ENCODE measurements at regions of chr4 and their contacts with region 1.

Region 1: DNA sequence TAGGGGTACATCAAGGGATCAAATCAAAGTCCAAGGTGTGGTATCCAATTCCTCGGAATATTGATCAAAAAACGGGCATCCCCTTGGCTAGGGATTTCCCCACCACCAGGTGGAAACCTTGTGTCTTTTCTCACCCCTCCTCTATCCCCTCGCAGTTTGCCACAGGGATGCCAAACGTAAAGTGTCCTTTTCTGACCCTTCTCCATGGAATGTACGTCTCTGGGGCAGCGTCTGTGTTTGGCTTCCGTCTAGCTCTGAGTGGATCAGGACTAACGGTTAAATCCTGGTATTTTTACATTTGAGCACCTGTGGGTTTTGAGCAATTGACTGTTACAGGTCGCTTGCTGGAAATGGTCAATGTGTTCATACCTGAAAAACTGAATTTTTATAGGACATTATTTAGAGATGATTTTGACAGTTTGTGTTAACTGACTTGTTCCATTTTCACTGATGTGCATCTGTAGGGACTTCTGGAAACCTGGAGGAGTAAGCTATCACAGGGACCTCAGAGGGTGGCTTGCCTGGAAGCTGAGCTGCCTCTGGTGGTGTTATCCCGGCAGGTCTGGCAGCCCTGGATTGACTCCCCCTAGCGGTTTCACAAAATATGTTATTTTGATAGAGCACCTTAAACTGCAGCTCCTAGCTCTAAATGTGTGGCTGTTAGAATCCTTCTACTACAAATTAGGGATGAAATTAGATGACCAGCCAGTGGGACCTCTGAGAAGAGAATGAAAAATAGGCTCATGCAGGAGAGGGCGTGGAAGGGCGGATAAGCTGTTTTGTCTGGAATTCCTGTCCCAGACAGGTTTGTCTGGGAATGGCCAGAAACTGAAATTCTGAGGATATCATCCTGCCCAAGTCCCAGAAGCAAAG is 8.8 kb upstream of the MGST2 start:
- DNase-seq: peak; percentile 63
- H3K4me3 Mint-ChIP-seq: peak overlapping the region; percentile 61
- H3K27ac Mint-ChIP-seq: peak overlapping the region; percentile 93
- H3K4me1 Mint-ChIP-seq: peaks cover 28% of the 10 kb centered on the region
- H3K27me3 Mint-ChIP-seq: peaks cover 7% of the 10 kb centered on the region

Region 2: GRCh38 chr4:139266583-139267257 is 390.1 kb before region 1 on chr4:
- CTCF ChIA-PET with region 1: no interaction called
- POLR2A ChIA-PET with region 1: no interaction called
- intact Hi-C with region 1: loop called (anchors 2 kb)
- DNase-seq: peak; percentile 94
- H3K4me3 Mint-ChIP-seq: peak overlapping the region; percentile 28
- H3K27ac Mint-ChIP-seq: peak overlapping the region; percentile 84
- H3K4me1 Mint-ChIP-seq: peaks cover 19% of the 10 kb centered on the region
- H3K27me3 Mint-ChIP-seq: peaks cover 1% of the 10 kb centered on the region

Region 3: DNA sequence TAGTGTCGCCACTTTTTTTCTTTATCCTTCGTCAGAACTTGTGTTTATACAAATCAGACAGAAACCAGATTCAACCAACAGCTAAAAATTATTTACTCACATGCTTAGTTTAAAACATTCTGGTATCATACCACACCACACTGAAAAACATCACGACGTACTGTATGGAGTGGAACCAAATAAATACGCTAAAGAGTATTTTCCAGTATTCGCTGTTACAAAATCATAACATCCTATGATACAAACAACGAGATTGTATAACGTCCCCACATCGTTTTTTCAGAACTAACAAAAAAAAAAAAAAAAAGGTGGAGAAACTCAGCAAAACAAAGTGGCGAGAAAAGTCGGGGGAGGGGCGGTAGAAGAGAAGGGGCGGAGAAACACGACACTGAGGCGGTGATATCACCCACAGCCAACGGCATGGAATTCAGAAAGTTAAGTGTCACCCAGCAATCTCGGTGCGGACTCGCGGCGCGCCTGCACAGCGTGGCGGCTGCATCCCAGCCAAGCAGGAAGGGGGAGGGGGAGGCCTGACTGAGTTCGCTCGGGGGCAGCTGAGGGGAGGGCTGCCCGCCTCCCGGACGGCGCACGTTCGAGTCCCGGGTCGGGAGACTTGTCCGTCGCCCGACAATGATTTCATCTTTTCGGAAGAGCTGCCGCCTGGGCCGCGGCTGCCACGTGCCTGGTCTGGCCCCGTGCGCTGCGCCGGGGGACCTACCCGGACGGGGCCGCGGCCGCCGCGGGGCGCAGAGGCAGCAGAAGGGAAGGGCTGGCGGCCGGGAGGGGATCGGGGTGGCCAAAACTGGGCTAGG is 101.8 kb before region 1 on chr4:
- CTCF ChIA-PET with region 1: interaction called, 8 read pairs
- POLR2A ChIA-PET with region 1: interaction called, 16 read pairs
- intact Hi-C with region 1: loop called (anchors 1 kb)
- DNase-seq: peak; percentile 91
- H3K4me3 Mint-ChIP-seq: peak overlapping the region; percentile 95
- H3K27ac Mint-ChIP-seq: peak overlapping the region; percentile 96
- H3K4me1 Mint-ChIP-seq: peaks cover 62% of the 10 kb centered on the region
- H3K27me3 Mint-ChIP-seq: no peaks in the 10 kb centered on the region

Region 4: DNA sequence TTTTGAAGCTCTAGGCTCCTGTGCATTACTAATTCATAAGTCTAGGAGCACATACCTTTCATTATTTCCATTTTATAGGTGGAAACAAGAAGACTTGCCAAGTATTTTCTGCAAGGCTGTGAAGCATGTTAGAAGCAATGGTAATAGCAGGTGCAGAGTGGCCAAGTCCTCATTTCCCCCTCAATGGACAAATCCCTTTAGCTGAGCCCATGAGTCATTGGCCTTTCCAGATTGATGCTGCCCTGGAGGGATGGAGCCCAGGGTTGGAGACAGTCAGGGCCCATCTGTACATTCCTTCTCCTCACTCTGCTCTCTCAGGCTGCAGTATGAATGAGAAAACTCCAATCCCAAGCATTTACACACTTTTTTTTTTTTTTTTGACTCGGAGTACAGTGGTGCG is 15.4 kb after region 1 on chr4:
- CTCF ChIA-PET with region 1: interaction called, 23 read pairs
- POLR2A ChIA-PET with region 1: no interaction called
- intact Hi-C with region 1: no loop called
- DNase-seq: no peak
- H3K4me3 Mint-ChIP-seq: no peak overlapping the region
- H3K27ac Mint-ChIP-seq: no peak overlapping the region
- H3K4me1 Mint-ChIP-seq: no peaks in the 10 kb centered on the region
- H3K27me3 Mint-ChIP-seq: no peaks in the 10 kb centered on the region

Region 5: GRCh38 chr4:139734875-139735380 is 78.1 kb after region 1 on chr4:
- CTCF ChIA-PET with region 1: interaction called, 3 read pairs
- POLR2A ChIA-PET with region 1: no interaction called
- intact Hi-C with region 1: loop called (anchors 5 kb)
- DNase-seq: peak; percentile 73
- H3K4me3 Mint-ChIP-seq: peak overlapping the region; percentile 46
- H3K27ac Mint-ChIP-seq: no peak overlapping the region
- H3K4me1 Mint-ChIP-seq: peaks cover 16% of the 10 kb centered on the region
- H3K27me3 Mint-ChIP-seq: peaks cover 40% of the 10 kb centered on the region

Region 6: GRCh38 chr4:140095694-140096482 is 439.0 kb after region 1 on chr4:
- CTCF ChIA-PET with region 1: interaction called, 3 read pairs
- POLR2A ChIA-PET with region 1: no interaction called
- intact Hi-C with region 1: loop called (anchors 5 kb)
- DNase-seq: peak; percentile 75
- H3K4me3 Mint-ChIP-seq: peak overlapping the region; percentile 75
- H3K27ac Mint-ChIP-seq: peak overlapping the region; percentile 98
- H3K4me1 Mint-ChIP-seq: peaks cover 71% of the 10 kb centered on the region
- H3K27me3 Mint-ChIP-seq: no peaks in the 10 kb centered on the region

Region 7: GRCh38 chr4:140359562-140360427 is 702.9 kb after region 1 on chr4:
- CTCF ChIA-PET with region 1: interaction called, 10 read pairs
- POLR2A ChIA-PET with region 1: no interaction called
- intact Hi-C with region 1: no loop called
- DNase-seq: peak; percentile 81
- H3K4me3 Mint-ChIP-seq: no peak overlapping the region
- H3K27ac Mint-ChIP-seq: no peak overlapping the region
- H3K4me1 Mint-ChIP-seq: no peaks in the 10 kb centered on the region
- H3K27me3 Mint-ChIP-seq: peaks cover 3% of the 10 kb centered on the region

Measured in activated CD4-positive, alpha-beta memory T cell treated with anti-CD3 and anti-CD28 coated beads for 36 hours (primary cell).